PC-9 (cell line): ENCODE measurements at regions of chr3 and their contacts with region 1.

Region 1: DNA sequence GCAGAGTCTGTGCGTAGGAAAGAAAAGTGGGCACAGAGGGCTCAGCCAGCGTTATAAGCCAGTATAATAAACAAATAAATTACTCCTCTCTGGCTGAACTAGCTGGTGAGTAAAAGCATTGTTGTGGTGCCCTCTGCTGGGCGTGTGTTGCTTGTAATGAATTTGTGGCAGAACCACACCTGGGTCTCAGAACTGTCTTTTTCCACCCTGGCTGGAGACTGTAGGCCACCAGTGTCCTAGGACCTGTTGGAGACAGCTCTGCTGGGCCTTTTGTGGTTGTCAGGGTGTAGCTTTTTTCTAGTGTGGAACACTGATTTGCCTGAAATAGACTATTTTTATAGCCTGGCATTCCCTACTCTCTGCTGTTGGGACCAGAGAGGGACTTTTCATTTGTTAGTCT is 130.5 kb upstream of the EIF1B start:
- DNase-seq: peak in 1 of 2 experiments; percentile 60
- H3K4me3 ChIP-seq: no peak overlapping the region
- H3K27ac ChIP-seq: no peak overlapping the region
- H3K4me1 ChIP-seq: no peaks in the 10 kb centered on the region
- H3K27me3 ChIP-seq: no peaks in the 10 kb centered on the region
- CTCF ChIP-seq: peak; percentile 72

Region 2: GRCh38 chr3:39447637-39448483 is 731.2 kb before region 1 on chr3:
- CTCF ChIA-PET with region 1: no interaction called
- POLR2A ChIA-PET with region 1: no interaction called
- intact Hi-C with region 1: loop called (anchors 5 kb)
- DNase-seq: peak; percentile 46 to 52
- H3K4me3 ChIP-seq: no peak overlapping the region
- H3K27ac ChIP-seq: no peak overlapping the region
- H3K4me1 ChIP-seq: no peaks in the 10 kb centered on the region
- H3K27me3 ChIP-seq: 0 out of 2 replicates have a peak, but pooled peaks cover 4% of the 10 kb centered on the region
- CTCF ChIP-seq: peak; percentile 87

Region 3: DNA sequence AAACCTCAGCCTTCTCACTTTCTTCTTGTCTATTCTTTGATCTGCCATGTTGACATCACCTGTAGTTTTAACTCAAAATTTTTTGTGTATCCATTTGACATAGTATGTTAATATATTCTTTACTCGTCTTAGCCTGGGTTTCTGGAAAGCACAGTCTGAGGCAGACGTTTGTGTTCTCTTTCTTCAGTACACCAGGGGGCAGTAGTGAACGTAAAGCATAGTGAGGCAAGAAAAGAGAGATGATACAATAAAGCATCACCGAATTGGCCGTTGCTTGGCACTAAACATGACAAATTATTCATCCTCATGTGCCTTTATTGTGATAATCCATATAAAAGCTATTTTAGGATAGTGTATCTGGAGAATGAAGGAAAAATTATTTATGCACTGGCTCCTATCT is 510.6 kb before region 1 on chr3:
- CTCF ChIA-PET with region 1: no interaction called
- POLR2A ChIA-PET with region 1: no interaction called
- intact Hi-C with region 1: loop called (anchors 10 kb)
- DNase-seq: no peak
- H3K4me3 ChIP-seq: no peak overlapping the region
- H3K27ac ChIP-seq: no peak overlapping the region
- H3K4me1 ChIP-seq: no peaks in the 10 kb centered on the region
- H3K27me3 ChIP-seq: peaks cover 24% of the 10 kb centered on the region; the same call in 1 of the 2 replicates
- CTCF ChIP-seq: peak; percentile 66

Region 4: GRCh38 chr3:39707314-39707909 is 471.6 kb before region 1 on chr3:
- CTCF ChIA-PET with region 1: no interaction called
- POLR2A ChIA-PET with region 1: no interaction called
- intact Hi-C with region 1: loop called (anchors 1 kb)
- DNase-seq: no peak
- H3K4me3 ChIP-seq: no peak overlapping the region
- H3K27ac ChIP-seq: no peak overlapping the region
- H3K4me1 ChIP-seq: no peaks in the 10 kb centered on the region
- H3K27me3 ChIP-seq: 0 out of 2 replicates have a peak, but pooled peaks cover 3% of the 10 kb centered on the region
- CTCF ChIP-seq: peak; percentile 72